Activated CD4-positive, alpha-beta T cell treated with anti-CD3 and anti-CD28 coated beads, Interleukin-2, amount 10 ng/mL, durations not matched to agents 24 days and 14 days (primary cell): ENCODE measurements at regions of chr6 and their contacts with region 1.

Region 1: GRCh38 chr6:143940011-143940597 is 68.0 kb downstream of the PLAGL1 start:
- DNase-seq: peak; percentile 86
- H3K4me3 Mint-ChIP-seq: no peak overlapping the region
- H3K27ac Mint-ChIP-seq: no peak overlapping the region
- H3K4me1 Mint-ChIP-seq: peaks cover 7% of the 10 kb centered on the region
- H3K27me3 Mint-ChIP-seq: peaks cover 2% of the 10 kb centered on the region

Region 2: DNA sequence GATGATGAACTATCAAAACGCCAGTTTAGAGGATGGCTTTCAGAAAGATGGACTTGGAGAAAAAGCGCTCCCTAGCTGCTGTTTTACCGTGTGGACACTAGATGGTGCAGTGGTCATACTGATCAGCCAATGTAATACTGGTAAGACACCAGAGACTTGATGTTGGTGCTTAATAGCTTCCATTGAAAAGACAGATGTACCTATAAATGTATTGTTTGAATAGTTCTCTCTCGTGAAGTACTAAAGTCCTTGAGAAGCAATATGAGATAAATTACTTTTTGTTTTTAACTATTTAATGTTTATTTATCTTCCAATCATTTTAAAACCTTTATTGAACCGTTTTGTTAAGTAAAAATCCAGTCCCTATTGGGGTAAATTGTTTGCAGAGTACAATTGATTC is 364.7 kb before region 1 on chr6:
- intact Hi-C with region 1: loop called (anchors 2 kb)
- DNase-seq: peak; percentile 88
- H3K4me3 Mint-ChIP-seq: no peak overlapping the region
- H3K27ac Mint-ChIP-seq: no peak overlapping the region
- H3K4me1 Mint-ChIP-seq: peaks cover 5% of the 10 kb centered on the region
- H3K27me3 Mint-ChIP-seq: no peaks in the 10 kb centered on the region

Region 3: DNA sequence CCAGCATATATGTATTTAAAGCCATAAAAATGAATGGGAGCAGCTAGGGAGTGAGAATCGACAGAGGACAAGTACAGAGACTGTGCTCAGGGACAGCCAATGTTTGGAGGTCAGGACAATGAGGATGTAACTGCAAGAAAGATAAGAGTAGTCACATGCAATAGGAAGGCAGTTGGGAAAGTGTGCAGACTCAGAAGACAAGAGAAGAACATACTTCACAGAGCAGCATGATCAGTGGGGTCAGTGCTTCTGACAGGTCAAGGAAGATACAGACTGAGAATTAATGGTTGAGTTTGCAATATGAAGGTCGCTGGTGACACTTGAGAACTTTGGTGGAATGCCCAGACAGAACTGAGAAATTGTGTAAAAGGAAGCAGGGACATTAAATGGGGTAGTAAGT is 42.9 kb after region 1 on chr6:
- intact Hi-C with region 1: no loop called
- DNase-seq: no peak
- H3K4me3 Mint-ChIP-seq: no peak overlapping the region
- H3K27ac Mint-ChIP-seq: no peak overlapping the region
- H3K4me1 Mint-ChIP-seq: no peaks in the 10 kb centered on the region
- H3K27me3 Mint-ChIP-seq: no peaks in the 10 kb centered on the region

Region 4: GRCh38 chr6:144036064-144036834 is 96.1 kb after region 1 on chr6:
- intact Hi-C with region 1: loop called (anchors 1 kb)
- DNase-seq: peak; percentile 76
- H3K4me3 Mint-ChIP-seq: peak overlapping the region; percentile 35
- H3K27ac Mint-ChIP-seq: peak overlapping the region; percentile 9
- H3K4me1 Mint-ChIP-seq: peaks cover 11% of the 10 kb centered on the region
- H3K27me3 Mint-ChIP-seq: no peaks in the 10 kb centered on the region